HEK293T (cell line): ENCODE measurements at regions of chr4 and their contacts with region 1.

Region 1: GRCh38 chr4:82469791-82470345 is 39.5 kb downstream of the ENOPH1 start:
- DNase-seq: no peak

Region 2: DNA sequence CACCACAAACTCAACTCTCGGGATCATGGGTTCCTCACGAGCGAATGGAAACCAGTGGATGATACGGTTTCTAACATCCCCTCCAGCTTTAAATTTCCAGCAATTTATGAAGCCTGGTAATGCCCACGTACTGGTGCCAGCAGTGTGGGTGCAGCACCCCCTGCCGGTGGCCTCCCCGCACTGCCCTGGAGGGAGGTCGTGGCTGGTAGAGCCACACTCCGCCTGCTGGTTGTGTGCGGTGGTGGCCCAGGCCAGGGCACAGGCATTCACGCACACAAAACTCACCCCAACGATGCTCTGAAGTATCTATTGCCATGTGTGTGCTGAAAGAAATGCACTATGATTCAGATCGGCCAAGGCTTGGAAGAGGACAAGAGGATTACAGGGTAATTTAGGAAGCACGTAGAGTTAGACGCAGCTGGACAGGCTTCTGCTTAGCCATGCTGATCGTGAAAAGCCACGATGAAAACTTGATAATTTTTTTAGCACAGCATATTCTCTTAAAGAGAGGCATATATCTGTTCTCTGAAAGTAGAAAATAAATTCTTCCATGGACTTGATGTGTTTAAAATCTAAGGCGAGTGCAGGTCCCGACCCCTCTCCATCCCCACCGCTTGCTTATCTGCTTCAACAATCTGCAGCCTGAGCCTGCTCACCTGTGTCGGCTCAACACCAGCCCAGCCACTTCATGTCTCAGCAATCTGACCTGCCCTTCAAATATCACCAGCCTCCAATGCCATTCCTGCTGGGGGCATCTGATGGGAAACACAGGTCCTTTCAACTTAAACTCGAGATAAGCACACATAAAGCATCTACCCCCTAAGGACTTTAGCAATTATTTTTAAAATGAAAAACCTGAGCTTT is 269.7 kb after region 1 on chr4:
- CTCF ChIA-PET with region 1: interaction called, 12 read pairs
- POLR2A ChIA-PET with region 1: no interaction called
- DNase-seq: peak; percentile 87